Left ventricle myocardium superior (tissue), 1 donor: ENCODE measurements at regions of chr2 and their contacts with region 1.

Region 1: GRCh38 chr2:33488715-33489540 is 12.5 kb downstream of the RASGRP3 start:
- DNase-seq: no peak
- ATAC-seq: no peak

Region 2: DNA sequence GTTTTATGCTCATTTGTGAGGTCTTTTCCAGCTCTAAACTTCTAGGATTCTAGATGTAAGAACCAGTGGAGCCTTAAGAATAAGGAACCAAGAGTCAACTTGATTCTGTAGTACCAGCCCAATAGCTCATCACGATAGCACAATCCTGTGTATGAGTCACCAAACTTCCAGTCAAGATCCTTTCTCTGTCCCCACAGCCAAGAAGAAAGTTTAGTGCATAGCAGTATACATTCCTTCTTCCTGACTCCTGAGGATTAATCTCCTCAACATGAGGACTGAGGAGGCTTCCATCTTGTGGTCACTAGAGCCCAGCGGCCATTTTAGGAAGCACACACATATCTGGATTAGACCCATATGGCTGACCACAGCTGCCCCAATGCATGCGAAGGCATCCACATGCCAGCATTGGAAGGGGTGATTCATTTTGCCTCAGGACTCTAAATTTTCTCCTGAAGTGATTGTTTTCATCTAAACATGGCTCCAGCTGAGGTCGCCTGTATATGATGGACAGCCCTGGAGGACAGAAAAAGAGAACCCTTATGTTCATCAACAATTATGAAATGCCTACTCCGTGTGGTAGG is 40.9 kb after region 1 on chr2:
- intact Hi-C with region 1: loop called (anchors 10 kb)
- DNase-seq: no peak
- ATAC-seq: no peak